HEK293 (cell line): ENCODE measurements at regions of chr3 and their contacts with region 1.

Region 1: DNA sequence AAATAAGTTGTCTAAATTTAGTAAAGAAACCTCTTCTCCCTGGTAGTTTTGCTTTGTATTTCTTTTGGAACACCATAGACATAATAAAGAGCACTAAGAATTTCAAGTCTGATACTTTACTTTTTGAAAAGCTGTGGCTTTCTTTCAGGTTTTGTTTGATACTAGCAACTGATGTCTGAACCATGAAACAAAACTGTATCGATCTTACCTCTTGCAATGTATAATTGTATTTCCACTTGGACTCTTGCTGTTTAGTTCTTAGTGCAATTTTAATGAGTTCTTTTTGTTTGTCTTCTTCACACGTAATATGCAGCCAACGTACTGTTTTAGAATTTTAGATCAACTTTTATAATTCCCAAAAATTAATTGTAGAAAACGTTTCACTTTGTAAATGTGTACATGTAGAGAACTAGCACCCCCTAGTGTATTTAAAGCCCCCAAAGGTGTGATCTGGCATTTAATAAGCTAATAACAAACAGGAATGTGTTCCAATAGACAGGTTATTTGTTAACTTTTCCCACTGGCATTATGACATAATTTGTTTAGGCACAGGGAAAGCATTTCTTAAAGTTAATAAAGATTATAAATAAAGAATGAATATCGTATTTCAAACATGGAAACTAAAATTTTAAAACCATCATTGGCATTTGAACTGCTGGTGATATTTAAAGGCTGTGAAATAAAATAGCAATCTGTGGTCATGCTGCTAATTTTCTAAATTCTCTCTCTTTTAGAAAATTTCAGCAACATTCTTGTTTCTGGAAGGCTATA is 289.1 kb upstream of the DNAJC19 start:
- H3K4me3 ChIP-seq: no peak overlapping the region
- H3K27ac ChIP-seq: no peak overlapping the region
- H3K4me1 ChIP-seq: no peaks in the 10 kb centered on the region
- CTCF ChIP-seq: no peak

Region 2: DNA sequence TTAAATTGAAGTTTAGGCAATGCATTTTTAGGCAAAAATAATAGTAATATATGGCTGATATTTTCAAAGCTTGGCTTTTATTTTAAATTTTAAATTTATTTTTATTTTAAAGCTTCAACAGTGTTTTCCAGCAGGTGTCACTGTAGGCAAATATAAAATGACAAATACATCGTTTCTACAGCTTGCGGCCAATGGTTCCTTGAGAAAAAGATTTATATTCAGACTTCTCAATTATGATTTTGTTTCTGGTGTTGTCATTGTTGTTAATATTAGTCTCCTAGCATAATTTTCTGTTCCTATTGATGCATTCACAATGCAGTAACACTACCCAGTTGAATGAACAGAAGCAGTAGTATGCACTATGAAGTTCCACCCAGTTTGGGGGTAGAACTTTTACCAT is 68.4 kb before region 1 on chr3:
- CTCF ChIA-PET with region 1: interaction called, 28 read pairs
- POLR2A ChIA-PET with region 1: no interaction called
- H3K4me3 ChIP-seq: no peak overlapping the region
- H3K27ac ChIP-seq: no peak overlapping the region
- H3K4me1 ChIP-seq: no peaks in the 10 kb centered on the region
- CTCF ChIP-seq: no peak

Region 3: DNA sequence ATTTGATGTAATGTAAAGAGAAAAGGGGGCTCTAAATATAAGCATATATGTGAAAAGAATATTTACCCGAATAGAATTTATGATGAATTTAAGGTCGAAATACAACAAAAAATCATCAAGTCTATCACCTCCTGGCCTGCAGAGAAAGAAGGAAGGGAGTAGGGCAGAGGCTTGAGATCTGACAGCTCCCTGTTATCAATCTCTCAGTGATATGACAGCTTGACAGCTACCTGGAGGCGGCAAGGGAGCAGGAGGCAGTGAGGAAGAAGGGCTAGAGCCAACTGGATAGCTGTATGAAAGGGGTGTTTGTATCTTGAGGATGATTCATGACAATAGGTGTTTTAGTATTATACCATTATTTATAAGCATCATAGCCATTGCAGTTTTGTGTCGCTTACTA is 10.7 kb after region 1 on chr3:
- CTCF ChIA-PET with region 1: no interaction called
- POLR2A ChIA-PET with region 1: no interaction called
- H3K4me3 ChIP-seq: no peak overlapping the region
- H3K27ac ChIP-seq: no peak overlapping the region
- H3K4me1 ChIP-seq: no peaks in the 10 kb centered on the region
- CTCF ChIP-seq: no peak

Region 4: DNA sequence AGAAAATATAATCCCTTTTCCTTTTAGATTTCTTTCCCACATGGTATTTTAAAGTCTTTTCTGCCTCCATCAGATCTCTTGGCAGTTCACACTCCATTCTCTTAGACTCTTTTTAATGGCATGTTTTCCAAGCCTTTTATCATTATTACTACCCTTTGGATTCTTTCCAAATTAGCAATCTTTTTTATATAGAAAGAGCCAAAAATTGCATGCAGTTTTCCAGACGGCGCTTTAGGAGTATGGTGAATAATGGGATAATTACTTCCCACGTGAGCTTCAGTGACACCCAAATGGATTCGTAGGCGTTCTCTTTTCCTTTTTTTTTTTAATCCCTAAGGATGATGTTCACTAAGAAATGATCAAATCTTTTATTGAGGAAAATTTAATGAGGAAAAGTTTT is 65.7 kb after region 1 on chr3:
- CTCF ChIA-PET with region 1: no interaction called
- POLR2A ChIA-PET with region 1: no interaction called
- H3K4me3 ChIP-seq: no peak overlapping the region
- H3K27ac ChIP-seq: no peak overlapping the region
- H3K4me1 ChIP-seq: no peaks in the 10 kb centered on the region
- CTCF ChIP-seq: no peak

Region 5: GRCh38 chr3:181379278-181379677 is 100.6 kb after region 1 on chr3:
- CTCF ChIA-PET with region 1: no interaction called
- POLR2A ChIA-PET with region 1: no interaction called
- H3K4me3 ChIP-seq: no peak overlapping the region
- H3K27ac ChIP-seq: no peak overlapping the region
- H3K4me1 ChIP-seq: no peaks in the 10 kb centered on the region
- CTCF ChIP-seq: no peak